Naive thymus-derived CD4-positive, alpha-beta T cell (primary cell): ENCODE measurements at regions of chr2 and their contacts with region 1.

Region 1: GRCh38 chr2:147082850-147083522 is 761.8 kb upstream of the ACVR2A start:
- DNase-seq: peak in 8 of 9 donors; percentile 11 to 57 (median 44)
- ATAC-seq: peak; percentile 68
- H3K4me3 ChIP-seq: no peak overlapping the region
- H3K4me3 Mint-ChIP-seq: no peak overlapping the region
- H3K27ac ChIP-seq: no peak overlapping the region
- H3K27ac Mint-ChIP-seq: no peak overlapping the region
- H3K4me1 ChIP-seq: no peaks in the 10 kb centered on the region
- H3K4me1 Mint-ChIP-seq: peaks cover 0 to 12% (median 0%) of the 10 kb centered on the region in 7 donors
- H3K27me3 ChIP-seq: no peaks in the 10 kb centered on the region
- H3K27me3 Mint-ChIP-seq: peaks cover 7 to 15% (median 9%) of the 10 kb centered on the region in 5 donors

Region 2: DNA sequence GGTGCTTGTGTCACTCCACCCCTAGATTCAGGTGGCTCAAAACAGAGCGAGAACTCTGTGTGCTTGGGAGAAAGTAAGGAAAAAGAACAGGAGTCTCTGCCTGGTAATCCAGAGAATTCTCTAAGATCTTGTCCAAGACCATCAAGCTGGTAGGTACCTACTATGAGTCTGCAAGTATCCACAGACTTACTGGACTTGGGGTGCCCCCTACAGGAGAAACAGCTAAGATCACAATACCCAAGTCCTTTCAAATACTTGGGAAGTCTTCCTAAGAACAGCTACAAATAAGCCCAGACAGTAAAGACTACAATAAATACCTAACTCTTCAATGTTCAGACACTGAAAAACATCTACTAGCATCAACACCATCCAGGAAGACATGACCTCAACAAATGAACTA is 381.8 kb before region 1 on chr2:
- CTCF ChIA-PET with region 1: no interaction called
- POLR2A ChIA-PET with region 1: no interaction called
- intact Hi-C with region 1: no loop called
- DNase-seq: no peak
- ATAC-seq: no peak
- H3K4me3 ChIP-seq: no peak overlapping the region
- H3K4me3 Mint-ChIP-seq: no peak overlapping the region
- H3K27ac ChIP-seq: no peak overlapping the region
- H3K27ac Mint-ChIP-seq: no peak overlapping the region
- H3K4me1 ChIP-seq: no peaks in the 10 kb centered on the region
- H3K4me1 Mint-ChIP-seq: no peaks in the 10 kb centered on the region
- H3K27me3 ChIP-seq: no peaks in the 10 kb centered on the region
- H3K27me3 Mint-ChIP-seq: no peaks in the 10 kb centered on the region

Region 3: DNA sequence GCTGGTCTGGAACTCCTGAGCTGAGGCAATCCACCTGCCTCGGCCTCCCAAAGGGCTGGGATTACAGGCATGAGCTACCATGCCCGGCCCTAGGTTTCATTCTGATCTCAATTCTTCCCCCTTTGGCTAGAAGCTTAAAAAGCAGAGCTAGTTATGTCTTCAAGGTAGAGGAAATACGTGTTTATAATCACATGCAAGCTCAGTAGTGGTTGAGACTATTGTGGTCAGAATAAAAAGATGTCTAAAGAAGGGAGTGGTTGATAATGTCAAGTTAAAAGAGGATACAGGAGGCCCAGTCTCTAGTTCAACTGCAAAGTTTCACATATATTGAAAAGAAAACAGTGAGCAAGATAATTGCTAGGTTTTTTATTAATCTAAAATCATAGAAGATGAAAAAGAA is 45.9 kb before region 1 on chr2:
- CTCF ChIA-PET with region 1: no interaction called
- POLR2A ChIA-PET with region 1: no interaction called
- intact Hi-C with region 1: loop called in 1 of 2 experiments (anchors 5 kb)
- DNase-seq: no peak
- ATAC-seq: peak; percentile 14
- H3K4me3 ChIP-seq: no peak overlapping the region
- H3K4me3 Mint-ChIP-seq: peak overlapping the region in 1 of 10 donors; percentile 17
- H3K27ac ChIP-seq: no peak overlapping the region
- H3K27ac Mint-ChIP-seq: no peak overlapping the region
- H3K4me1 ChIP-seq: no peaks in the 10 kb centered on the region
- H3K4me1 Mint-ChIP-seq: peaks cover 0 to 4% (median 0%) of the 10 kb centered on the region in 7 donors
- H3K27me3 ChIP-seq: no peaks in the 10 kb centered on the region
- H3K27me3 Mint-ChIP-seq: peaks cover 0 to 17% (median 8%) of the 10 kb centered on the region in 5 donors

Region 4: GRCh38 chr2:147288131-147288530 is 205.1 kb after region 1 on chr2:
- CTCF ChIA-PET with region 1: no interaction called
- POLR2A ChIA-PET with region 1: no interaction called
- intact Hi-C with region 1: loop called (anchors 1 to 2 kb)
- DNase-seq: peak in 5 of 9 donors; percentile 2 to 48 (median 19)
- ATAC-seq: peak; percentile 87
- H3K4me3 ChIP-seq: no peak overlapping the region
- H3K4me3 Mint-ChIP-seq: peak overlapping the region in 1 of 10 donors; percentile 45
- H3K27ac ChIP-seq: no peak overlapping the region
- H3K27ac Mint-ChIP-seq: peak overlapping the region in 4 of 9 donors; percentile 25 to 84 (median 63)
- H3K4me1 ChIP-seq: peaks cover 0 to 10% of the 10 kb centered on the region in 2 donors
- H3K4me1 Mint-ChIP-seq: peaks cover 8 to 43% (median 9%) of the 10 kb centered on the region in 7 donors
- H3K27me3 ChIP-seq: no peaks in the 10 kb centered on the region
- H3K27me3 Mint-ChIP-seq: peaks cover 0 to 5% (median 0%) of the 10 kb centered on the region in 5 donors

Region 5: GRCh38 chr2:147657086-147658000 is 574.4 kb after region 1 on chr2:
- CTCF ChIA-PET with region 1: no interaction called
- POLR2A ChIA-PET with region 1: no interaction called
- intact Hi-C with region 1: loop called in 1 of 2 experiments (anchors 1 kb)
- DNase-seq: no peak
- ATAC-seq: no peak
- H3K4me3 ChIP-seq: no peak overlapping the region
- H3K4me3 Mint-ChIP-seq: no peak overlapping the region
- H3K27ac ChIP-seq: no peak overlapping the region
- H3K27ac Mint-ChIP-seq: peak overlapping the region in 2 of 9 donors; percentile 26 to 38
- H3K4me1 ChIP-seq: peaks cover 0 to 5% of the 10 kb centered on the region in 2 donors
- H3K4me1 Mint-ChIP-seq: peaks cover 7 to 30% (median 26%) of the 10 kb centered on the region in 7 donors
- H3K27me3 ChIP-seq: no peaks in the 10 kb centered on the region
- H3K27me3 Mint-ChIP-seq: no peaks in the 10 kb centered on the region